HEK293 (cell line): ENCODE measurements at regions of chr1 and their contacts with region 1.

Region 1: GRCh38 chr1:201114236-201115131 is 2.3 kb upstream of the CACNA1S start:
- H3K4me3 ChIP-seq: peak overlapping the region; percentile 71
- H3K27ac ChIP-seq: peak overlapping the region; percentile 32; the same call in 1 of the 2 replicates
- H3K4me1 ChIP-seq: no peaks in the 10 kb centered on the region
- CTCF ChIP-seq: peak; percentile 97

Region 2: GRCh38 chr1:201023517-201023902 is 91.0 kb before region 1 on chr1 and contains the start of gene KIF21B:
- CTCF ChIA-PET with region 1: interaction called, 14 read pairs
- POLR2A ChIA-PET with region 1: interaction called, 3 read pairs
- H3K4me3 ChIP-seq: peak within 1 kb of the TSS; percentile 46
- H3K27ac ChIP-seq: peak within 1 kb of the TSS; percentile 27; the same call in 1 of the 2 replicates
- H3K4me1 ChIP-seq: no peaks in the 10 kb centered on the region
- CTCF ChIP-seq: no peak

Region 3: DNA sequence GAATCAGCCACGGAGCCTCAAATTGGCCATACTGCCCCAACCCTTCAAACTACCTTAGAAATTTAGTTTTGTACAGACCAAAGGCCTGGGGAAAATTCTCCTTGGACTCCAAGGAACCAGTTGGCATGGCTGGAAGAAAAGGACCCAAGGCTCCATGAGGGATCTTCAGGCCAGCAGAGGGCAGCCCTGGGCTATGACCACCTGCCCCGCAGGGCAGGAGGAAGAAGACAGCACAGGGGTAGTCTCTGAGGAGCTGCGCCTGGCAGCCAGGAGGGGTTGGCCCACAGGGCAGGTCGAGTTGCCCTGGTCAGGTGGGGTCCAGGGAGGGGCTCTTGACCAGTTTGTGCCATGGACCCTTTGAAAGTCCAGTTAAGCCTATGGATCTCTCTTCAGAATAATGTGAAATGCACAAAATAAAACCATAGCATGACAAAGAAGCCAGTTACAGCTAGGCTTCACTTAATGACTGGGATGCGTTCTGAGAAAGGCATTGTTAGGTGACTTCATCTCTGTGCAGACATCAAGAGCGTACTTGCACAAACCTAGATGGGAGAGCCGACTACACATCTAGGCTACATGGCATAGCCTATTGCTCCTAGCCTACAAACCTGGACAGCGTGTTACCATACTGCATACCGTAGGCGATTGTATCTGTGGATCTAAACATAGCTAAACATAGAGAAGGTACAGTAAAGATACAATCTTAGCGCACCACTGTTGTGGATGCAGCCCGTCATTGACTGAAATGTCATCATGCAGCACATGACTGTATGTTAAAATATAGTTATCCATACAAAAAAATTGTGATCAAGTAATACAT is 28.4 kb before region 1 on chr1:
- CTCF ChIA-PET with region 1: interaction called, 38 read pairs
- POLR2A ChIA-PET with region 1: no interaction called
- H3K4me3 ChIP-seq: no peak overlapping the region
- H3K27ac ChIP-seq: no peak overlapping the region
- H3K4me1 ChIP-seq: no peaks in the 10 kb centered on the region
- CTCF ChIP-seq: peak; percentile 60

Region 4: DNA sequence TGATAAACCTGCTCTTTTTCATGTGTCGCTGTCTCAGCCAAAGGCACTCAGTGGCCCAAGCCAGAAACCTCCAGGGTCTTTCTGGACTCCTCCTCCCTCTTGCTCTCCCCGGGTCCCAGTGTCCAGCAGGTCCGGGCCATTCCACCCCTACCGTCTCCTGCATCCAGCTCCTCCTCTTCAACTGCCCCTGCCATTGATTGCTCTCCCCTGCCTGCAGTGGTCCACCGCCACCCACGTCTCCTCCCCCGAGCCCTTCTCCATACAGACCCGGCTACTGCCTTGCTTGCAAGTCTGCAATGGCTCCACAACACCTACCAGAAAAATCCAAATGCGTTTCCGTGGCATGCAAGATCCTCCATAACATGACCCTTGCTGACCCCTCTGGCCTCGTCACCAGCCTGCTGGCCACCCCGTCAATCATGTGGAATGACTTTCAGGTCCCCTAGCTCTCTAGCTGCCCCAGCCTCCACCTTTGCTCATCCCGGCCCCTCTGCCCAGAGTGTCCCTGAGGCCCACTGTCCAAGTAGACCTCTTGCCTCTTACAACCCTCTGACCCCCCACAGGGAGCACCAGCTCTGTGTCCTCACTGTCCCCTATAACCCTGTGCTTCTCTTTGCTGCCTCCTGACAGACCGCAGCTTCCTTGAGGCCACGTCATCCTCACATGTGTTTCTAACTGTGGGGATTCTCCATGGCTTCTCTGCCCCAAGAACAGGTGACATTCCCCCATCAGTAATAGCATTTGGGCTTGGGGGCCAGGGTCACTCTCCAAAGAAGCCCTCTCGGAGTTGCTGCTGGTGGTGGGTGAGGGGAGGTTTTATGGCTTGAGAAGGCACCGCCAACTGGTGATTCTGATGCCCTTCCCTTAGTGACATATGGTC is 17.3 kb before region 1 on chr1:
- CTCF ChIA-PET with region 1: interaction called, 12 read pairs
- POLR2A ChIA-PET with region 1: no interaction called
- H3K4me3 ChIP-seq: no peak overlapping the region
- H3K27ac ChIP-seq: no peak overlapping the region
- H3K4me1 ChIP-seq: no peaks in the 10 kb centered on the region
- CTCF ChIP-seq: no peak